ENCODE measurements at regions of chr20 and their contacts with region 1.

Region 1: GRCh38 chr20:45771182-45771759 is 20.4 kb downstream of the WFDC3 start:
- DNase-seq: peak; percentile 76 to 86
- ATAC-seq: peak; percentile 79 to 94 (median 83)
- H3K4me3 ChIP-seq: no peak overlapping the region
- H3K27ac ChIP-seq: no peak overlapping the region
- H3K4me1 ChIP-seq: no peaks in the 10 kb centered on the region
- H3K27me3 ChIP-seq: no peaks in the 10 kb centered on the region
- CTCF ChIP-seq: peak; percentile 97

Region 2: GRCh38 chr20:45322952-45323383 is 448.3 kb before region 1 on chr20:
- intact Hi-C with region 1: loop called (anchors 1 to 2 kb)
- DNase-seq: peak; percentile 75 to 90
- ATAC-seq: peak; percentile 75 to 88 (median 83)
- H3K4me3 ChIP-seq: no peak overlapping the region
- H3K27ac ChIP-seq: peak overlapping the region; percentile 69
- H3K4me1 ChIP-seq: peaks cover 3% of the 10 kb centered on the region
- H3K27me3 ChIP-seq: no peaks in the 10 kb centered on the region
- CTCF ChIP-seq: peak; percentile 58

Region 3: DNA sequence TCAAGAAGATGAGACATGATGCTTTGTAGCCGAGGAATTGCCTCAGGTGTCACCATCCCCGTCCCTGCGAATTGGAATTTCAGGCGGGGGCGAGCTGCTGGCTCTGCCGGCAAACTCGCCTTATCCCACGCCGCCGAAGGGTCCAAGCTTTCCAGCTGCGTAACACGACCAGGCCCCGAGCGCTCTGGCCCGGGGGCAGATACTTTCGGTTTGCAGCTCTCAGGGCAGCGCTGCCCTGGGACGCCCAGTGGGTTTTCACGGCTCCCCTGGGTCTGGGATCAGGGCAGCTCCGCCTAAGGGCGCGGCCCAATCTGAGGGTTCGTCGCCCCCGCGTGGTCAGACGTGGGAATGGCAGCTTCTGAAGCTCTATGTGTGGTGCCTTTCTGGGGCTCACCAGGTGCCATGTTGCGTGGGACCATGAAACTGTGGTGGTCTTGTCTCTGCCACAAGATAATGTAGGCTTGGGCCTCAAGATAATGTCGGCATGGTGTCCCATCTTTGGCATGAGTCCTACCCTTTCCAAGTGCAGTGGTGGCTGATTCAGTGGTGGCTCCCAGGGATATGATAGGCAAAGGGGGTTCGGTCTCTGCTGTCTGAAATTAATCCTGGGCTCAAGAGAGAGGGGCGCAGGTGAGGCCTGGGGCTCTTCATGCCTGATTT is 334.4 kb before region 1 on chr20:
- intact Hi-C with region 1: loop called (anchors 5 to 10 kb)
- DNase-seq: peak; percentile 89 to 94
- ATAC-seq: peak; percentile 99 to 100 (median 99)
- H3K4me3 ChIP-seq: peak overlapping the region; percentile 83
- H3K27ac ChIP-seq: peak overlapping the region; percentile 72
- H3K4me1 ChIP-seq: peaks cover 7% of the 10 kb centered on the region
- H3K27me3 ChIP-seq: no peaks in the 10 kb centered on the region
- CTCF ChIP-seq: peak; percentile 97

Region 4: GRCh38 chr20:45445805-45446562 is 325.3 kb before region 1 on chr20:
- intact Hi-C with region 1: loop called in 1 of 2 experiments (anchors 10 kb)
- DNase-seq: no peak
- ATAC-seq: no peak
- H3K4me3 ChIP-seq: no peak overlapping the region
- H3K27ac ChIP-seq: no peak overlapping the region
- H3K4me1 ChIP-seq: no peaks in the 10 kb centered on the region
- H3K27me3 ChIP-seq: peaks cover 0 to 5% (median 0%) of the 10 kb centered on the region in 3 donors
- CTCF ChIP-seq: peak; percentile 27

Region 5: DNA sequence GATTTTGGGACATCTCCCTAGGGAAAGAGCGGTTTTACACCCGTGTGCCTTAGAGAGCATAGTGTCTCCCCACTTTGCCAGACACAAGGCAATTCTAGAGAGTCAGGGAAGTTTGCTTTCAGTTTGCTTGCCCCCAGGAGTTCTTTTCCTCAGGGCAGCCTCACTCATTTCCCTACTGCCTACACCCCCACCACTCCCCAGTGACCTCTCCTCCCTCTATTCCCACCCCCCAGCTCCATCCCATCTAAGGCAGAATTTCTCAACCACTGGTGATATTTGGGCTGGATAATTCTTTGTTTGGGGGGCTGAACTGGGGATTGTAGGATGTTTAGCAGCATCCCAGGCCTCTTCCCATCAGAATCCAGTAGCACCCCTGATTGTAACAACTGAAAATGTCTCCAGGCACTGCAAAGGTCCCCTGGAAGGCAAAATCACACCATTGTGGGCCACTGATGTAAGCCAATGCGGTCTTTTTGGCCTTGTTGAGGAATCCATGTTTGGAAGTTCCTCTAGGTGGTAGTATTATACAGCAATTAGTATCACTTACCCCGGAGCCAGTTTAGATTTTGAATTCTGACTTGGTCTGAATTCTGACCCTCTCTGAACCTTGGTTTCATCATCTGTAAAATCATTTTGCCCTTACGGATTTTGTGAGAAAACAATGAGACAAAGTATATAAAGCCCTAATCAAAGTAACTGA is 225.4 kb before region 1 on chr20:
- intact Hi-C with region 1: loop called in 1 of 2 experiments (anchors 5 kb)
- DNase-seq: no peak
- ATAC-seq: no peak
- H3K4me3 ChIP-seq: no peak overlapping the region
- H3K27ac ChIP-seq: no peak overlapping the region
- H3K4me1 ChIP-seq: no peaks in the 10 kb centered on the region
- H3K27me3 ChIP-seq: peaks cover 0 to 10% (median 4%) of the 10 kb centered on the region in 3 donors
- CTCF ChIP-seq: peak; percentile 23

Region 6: DNA sequence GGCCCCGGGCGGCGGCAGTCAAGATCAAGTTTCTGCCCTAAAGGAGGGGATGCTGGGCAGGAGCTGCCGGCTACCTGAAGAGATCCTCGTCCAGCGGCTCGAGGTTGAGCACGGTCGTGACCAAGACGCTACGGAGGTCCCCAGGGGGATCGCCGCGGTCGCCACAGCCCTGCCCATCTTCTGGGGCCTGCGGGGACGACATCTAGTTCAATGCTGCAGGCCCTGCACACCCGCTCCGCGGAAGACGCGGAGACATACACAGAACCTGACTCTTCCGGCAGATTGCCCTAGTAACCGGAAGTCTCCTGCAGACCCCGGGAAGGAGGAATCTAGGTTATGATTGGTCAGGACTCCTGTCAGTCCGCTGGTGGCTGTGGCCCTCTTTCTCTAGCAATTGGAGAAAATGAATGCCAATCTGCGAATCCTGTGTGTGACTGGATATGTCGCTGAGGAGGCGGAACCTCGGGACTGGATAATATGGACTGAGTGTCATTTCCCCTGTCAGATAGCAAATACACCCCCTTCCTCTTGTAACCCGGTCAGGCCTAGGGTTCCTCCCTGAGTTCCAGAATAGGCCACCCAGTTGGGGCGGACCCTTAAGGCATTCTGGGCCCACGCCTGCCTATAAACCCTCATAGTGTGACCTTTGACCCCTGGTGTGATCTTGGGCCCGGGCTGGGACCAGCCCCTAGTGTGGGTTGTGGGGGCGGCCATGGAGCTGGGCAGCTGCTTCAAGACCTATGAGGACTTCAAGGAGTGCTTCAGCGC is 86.0 kb after region 1 on chr20 and contains the starts of genes ACOT8 and ZSWIM3:
- intact Hi-C with region 1: no loop called
- DNase-seq: peak; percentile 87 to 93
- ATAC-seq: peak; percentile 96 to 98 (median 97)
- H3K4me3 ChIP-seq: peak within 1 kb of the TSS; percentile 87
- H3K27ac ChIP-seq: peak within 1 kb of the TSS; percentile 85
- H3K4me1 ChIP-seq: peaks cover 24% of the 10 kb centered on the region
- H3K27me3 ChIP-seq: no peaks in the 10 kb centered on the region
- CTCF ChIP-seq: no peak
- total RNA-seq, gene ACOT8: 20.3 to 29.6 (median 24.9) TPM
- total RNA-seq, gene ZSWIM3: 1.4 to 2.7 (median 1.5) TPM